Stomach (tissue), 19 donors: ENCODE measurements at regions of chr2 and their contacts with region 1.

Region 1: DNA sequence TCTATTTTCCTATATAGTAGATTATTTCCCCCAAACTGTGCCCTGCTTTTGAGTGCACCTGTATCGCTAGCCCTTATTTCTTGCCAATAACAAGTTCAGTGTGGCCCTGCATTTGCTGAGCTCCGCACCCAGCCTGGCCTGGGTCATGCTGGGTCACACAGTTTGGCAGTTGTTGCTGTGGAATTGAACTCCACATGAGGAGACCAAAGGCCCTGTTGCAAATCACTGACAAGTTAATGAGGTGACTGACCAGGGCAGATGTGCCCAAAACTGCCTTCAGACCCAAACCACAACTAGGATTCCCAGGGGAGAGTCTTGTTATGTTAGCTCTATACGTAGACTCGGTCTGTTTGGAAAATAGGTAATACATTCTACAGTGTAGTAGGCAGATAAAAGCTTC is 31.0 kb downstream of the COL4A4 start:
- DNase-seq: no peak
- H3K4me3 ChIP-seq: no peak overlapping the region
- H3K27ac ChIP-seq: no peak overlapping the region
- H3K4me1 ChIP-seq: peaks cover 0 to 4% (median 0%) of the 10 kb centered on the region in 4 donors
- H3K27me3 ChIP-seq: peaks cover 0 to 11% (median 3%) of the 10 kb centered on the region in 3 donors
- CTCF ChIP-seq: no peak
- EP300 ChIP-seq: no peak
- POLR2A ChIP-seq: no peak

Region 2: DNA sequence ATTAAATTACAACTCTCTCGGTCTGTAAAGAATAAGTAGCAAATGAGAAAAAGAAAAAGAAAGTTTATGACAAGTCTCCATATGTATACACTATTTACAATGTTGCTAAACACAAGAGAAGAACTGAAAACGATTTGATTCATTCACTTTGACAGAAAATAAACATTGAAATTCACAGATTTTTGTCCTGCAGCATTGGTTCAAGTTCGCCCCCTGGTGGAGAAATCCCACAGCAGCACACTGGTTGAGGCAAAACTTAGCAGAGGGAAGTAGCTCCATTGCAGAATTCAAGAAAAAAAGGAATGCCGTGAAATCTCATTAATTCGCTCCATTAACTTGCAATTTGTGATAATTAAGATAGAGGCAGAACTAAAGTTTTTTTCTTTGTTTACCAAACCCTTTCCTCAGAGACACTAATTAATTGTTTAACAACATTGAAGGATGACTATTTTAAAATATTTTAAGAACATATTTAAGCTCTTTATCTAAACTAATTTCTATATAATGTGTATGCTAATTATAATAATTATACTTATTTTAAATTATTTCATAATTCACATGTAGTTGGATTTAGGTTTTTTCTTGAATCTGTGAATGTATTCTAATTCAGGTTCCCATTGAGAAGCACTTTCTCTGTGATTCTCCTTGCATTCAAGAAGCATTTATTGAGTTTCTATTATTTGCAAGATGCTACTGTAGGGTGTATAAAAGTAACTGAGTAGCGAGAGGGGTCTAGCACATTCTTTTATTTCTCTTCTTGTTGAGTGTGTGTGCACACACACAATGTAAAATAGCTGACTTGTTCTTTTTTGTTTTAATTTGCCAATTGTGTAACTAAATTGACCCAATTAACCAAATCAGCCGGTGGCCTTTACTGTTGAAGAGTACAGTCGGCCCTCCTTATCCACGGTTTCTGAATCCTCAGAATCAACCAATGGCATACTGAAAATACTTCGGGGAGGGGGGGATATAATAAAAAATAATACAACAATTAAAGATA is 105.6 kb after region 1 on chr2:
- intact Hi-C with region 1: loop called (anchors 5 kb)
- DNase-seq: peak; percentile 72 to 86
- H3K4me3 ChIP-seq: no peak overlapping the region
- H3K27ac ChIP-seq: no peak overlapping the region
- H3K4me1 ChIP-seq: peaks cover 0 to 5% (median 3%) of the 10 kb centered on the region in 4 donors
- H3K27me3 ChIP-seq: peaks cover 0 to 6% (median 0%) of the 10 kb centered on the region in 3 donors
- CTCF ChIP-seq: peak in 5 of 7 experiments; percentile 73 to 90 (median 88)
- EP300 ChIP-seq: no peak
- POLR2A ChIP-seq: no peak